Caco-2 (cell line): ENCODE measurements at regions of chr1 and their contacts with region 1.

Region 1: GRCh38 chr1:50774759-50775351 is 185.2 kb downstream of the FAF1 start:
- DNase-seq: peak in 1 of 2 experiments; percentile 21
- H3K4me3 ChIP-seq: no peak overlapping the region
- H3K4me3 Mint-ChIP-seq: no peak overlapping the region
- H3K27ac Mint-ChIP-seq: no peak overlapping the region
- H3K4me1 ChIP-seq: no peaks in the 10 kb centered on the region
- H3K4me1 Mint-ChIP-seq: peaks cover 6% of the 10 kb centered on the region
- H3K27me3 ChIP-seq: no peaks in the 10 kb centered on the region
- H3K27me3 Mint-ChIP-seq: no peaks in the 10 kb centered on the region
- CTCF ChIP-seq: peak; percentile 44 to 64

Region 2: GRCh38 chr1:50959913-50960844 is 185.3 kb after region 1 on chr1 and contains the start of gene FAF1:
- CTCF ChIA-PET with region 1: no interaction called
- POLR2A ChIA-PET with region 1: no interaction called
- intact Hi-C with region 1: loop called (anchors 10 kb)
- DNase-seq: peak; percentile 97 to 98
- H3K4me3 ChIP-seq: peak within 1 kb of the TSS; percentile 89
- H3K4me3 Mint-ChIP-seq: peak within 1 kb of the TSS; percentile 85
- H3K27ac Mint-ChIP-seq: peak within 1 kb of the TSS; percentile 25
- H3K4me1 ChIP-seq: no peaks in the 10 kb centered on the region
- H3K4me1 Mint-ChIP-seq: peaks cover 7% of the 10 kb centered on the region
- H3K27me3 ChIP-seq: no peaks in the 10 kb centered on the region
- H3K27me3 Mint-ChIP-seq: no peaks in the 10 kb centered on the region
- CTCF ChIP-seq: peak in 1 of 2 experiments; percentile 35
- total RNA-seq, gene FAF1: 78.7 and 81.6 TPM in 2 replicates